SK-N-SH (cell line): ENCODE measurements at regions of chr3 and their contacts with region 1.

Region 1: DNA sequence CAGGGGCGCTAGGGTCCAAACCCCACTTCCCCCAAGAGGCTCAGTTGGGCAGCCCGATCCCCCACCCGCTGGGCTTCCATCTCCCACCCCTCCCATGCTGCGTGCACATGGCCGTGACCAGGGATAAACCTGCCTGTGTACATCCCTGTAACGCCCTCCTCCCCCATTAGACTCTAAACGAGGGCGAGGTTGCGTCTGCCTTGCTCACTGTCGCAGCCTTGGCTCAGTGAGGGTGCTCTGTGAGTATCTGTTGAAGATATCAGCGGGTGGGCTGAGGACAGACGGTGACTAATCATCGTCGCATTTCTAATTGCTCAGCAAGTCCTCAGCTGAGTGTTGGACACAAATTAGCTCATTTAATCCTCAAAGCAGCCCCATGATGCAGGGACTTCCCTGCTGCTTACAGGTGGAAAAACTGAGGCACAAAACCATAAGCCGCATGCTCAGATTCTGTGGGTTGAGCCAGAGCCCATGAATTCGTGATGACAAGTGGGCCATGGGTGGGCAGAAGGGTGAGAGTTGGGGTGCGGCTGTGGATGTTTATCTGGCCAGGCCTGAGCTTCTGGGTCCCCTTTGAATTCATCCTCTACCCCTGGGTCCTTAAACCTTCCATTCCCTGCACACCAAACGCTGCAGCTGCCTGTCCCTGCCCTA is 26.0 kb downstream of the FBLN2 start:
- DNase-seq: no peak
- H3K4me3 ChIP-seq: no peak overlapping the region
- H3K27ac ChIP-seq: peak overlapping the region in 1 of 2 experiments; percentile 99; a peak in 3 of 4 replicates
- H3K4me1 ChIP-seq: peaks cover 3 to 76% of the 10 kb centered on the region in 2 experiments; a peak in 2 of 4 replicates
- H3K27me3 ChIP-seq: no peaks in the 10 kb centered on the region
- CTCF ChIP-seq: no peak
- EP300 ChIP-seq: no peak
- RAD21 ChIP-seq: no peak

Region 2: DNA sequence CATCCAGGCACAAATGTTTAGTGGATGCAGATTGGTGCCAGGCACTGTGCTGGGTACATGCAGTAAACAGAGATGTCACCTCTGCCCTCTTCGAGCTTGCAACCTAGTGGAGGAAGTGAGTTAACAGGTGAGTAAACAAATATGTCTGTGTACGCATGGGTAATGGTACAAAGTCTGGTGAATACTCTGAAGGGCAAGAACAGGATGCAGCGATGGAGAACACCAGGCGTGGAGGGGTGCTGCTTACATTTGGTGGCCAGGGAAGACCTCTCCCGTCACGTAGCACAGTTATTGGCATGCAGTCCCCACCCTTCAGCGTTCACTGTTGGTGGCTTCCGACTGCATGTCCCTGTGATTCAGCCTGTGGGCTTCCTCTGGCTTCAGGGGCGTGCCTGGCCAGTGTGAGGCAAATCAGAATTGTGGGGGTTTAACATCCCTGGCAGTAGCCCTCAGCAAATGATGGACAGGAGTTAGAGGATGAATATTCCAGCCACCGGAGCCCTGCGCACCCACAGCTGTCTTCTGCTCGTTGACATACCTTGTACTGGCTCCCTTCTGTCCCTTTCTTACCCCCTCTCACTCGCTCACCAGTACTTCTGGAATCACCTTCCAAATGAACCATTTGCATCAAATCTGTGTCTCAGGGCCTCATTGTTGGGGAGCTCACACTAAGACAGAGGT is 103.9 kb before region 1 on chr3:
- CTCF ChIA-PET with region 1: no interaction called
- POLR2A ChIA-PET with region 1: no interaction called
- DNase-seq: no peak
- H3K4me3 ChIP-seq: no peak overlapping the region
- H3K27ac ChIP-seq: no peak overlapping the region
- H3K4me1 ChIP-seq: peaks cover 0 to 5% of the 10 kb centered on the region in 2 experiments; a peak in 1 of 4 replicates
- H3K27me3 ChIP-seq: peaks cover 22% of the 10 kb centered on the region; the same call in 1 of the 2 replicates
- CTCF ChIP-seq: no peak
- EP300 ChIP-seq: no peak
- RAD21 ChIP-seq: no peak

Region 3: GRCh38 chr3:13548696-13549622 is 26.0 kb before region 1 on chr3 and contains the start of gene FBLN2:
- CTCF ChIA-PET with region 1: interaction called, 3 read pairs
- POLR2A ChIA-PET with region 1: interaction called, 10 read pairs
- DNase-seq: peak; percentile 99
- H3K4me3 ChIP-seq: peak within 1 kb of the TSS in 1 of 2 experiments; percentile 38; a peak in 2 of 4 replicates
- H3K27ac ChIP-seq: no peak within 1 kb of the TSS; a peak in 1 of 4 replicates
- H3K4me1 ChIP-seq: peaks cover 0 to 35% of the 10 kb centered on the region in 2 experiments; a peak in 1 of 4 replicates
- H3K27me3 ChIP-seq: no peaks in the 10 kb centered on the region
- CTCF ChIP-seq: no peak
- EP300 ChIP-seq: no peak
- RAD21 ChIP-seq: no peak
- polyA plus RNA-seq, gene FBLN2: 4.8 and 5.2 TPM in 2 replicates